Posterior vena cava (tissue), 2 donors: ENCODE measurements at regions of chr6 and their contacts with region 1.

Region 1: GRCh38 chr6:42782622-42783176 is 847 bp downstream of the BICRAL start:
- DNase-seq: peak; percentile 96

Region 2: DNA sequence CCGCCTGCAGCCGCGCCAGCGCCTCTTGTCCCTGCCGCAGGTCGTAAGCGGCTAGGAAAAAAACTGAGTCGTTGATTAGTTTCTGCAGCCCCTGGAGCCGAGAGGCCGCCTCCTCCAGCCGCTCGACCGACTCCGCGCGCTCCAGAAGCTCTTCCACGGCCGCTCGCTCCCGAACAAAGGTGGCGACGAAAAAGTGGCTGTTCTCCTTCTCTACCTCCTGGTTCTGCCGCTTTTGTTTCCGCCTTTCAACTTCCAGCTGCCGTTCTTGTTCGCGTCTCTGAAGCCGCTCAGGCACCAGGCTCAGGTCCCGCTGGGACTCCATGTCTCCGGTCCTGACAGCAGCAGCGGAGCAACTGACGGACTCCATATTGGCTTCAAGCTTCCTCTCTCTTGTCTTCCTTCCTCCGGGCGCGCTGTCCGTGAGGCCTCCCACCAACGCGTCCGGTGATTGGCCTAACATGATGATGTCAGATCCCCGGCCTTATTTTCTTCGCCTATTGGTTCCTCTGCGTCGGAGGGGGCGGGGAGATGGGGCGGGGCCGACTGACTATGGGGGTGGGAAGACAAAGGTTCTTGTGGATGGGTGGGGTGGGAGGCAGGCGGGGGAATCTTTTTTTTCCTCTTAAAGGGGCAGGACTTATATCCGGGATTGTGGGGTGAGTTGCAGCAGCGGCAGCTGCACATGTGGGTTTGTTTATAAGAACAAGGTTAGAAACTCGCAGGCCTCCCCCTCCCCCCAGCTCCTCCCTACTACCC is 36.8 kb before region 1 on chr6 and contains the start of gene TBCC:
- intact Hi-C with region 1: loop called in 1 of 2 experiments (anchors 5 kb)
- DNase-seq: peak; percentile 98
- total RNA-seq, gene TBCC: 13.9 to 16.2 TPM